K562 (cell line): ENCODE measurements at regions of chr12 and their contacts with region 1.

Region 1: DNA sequence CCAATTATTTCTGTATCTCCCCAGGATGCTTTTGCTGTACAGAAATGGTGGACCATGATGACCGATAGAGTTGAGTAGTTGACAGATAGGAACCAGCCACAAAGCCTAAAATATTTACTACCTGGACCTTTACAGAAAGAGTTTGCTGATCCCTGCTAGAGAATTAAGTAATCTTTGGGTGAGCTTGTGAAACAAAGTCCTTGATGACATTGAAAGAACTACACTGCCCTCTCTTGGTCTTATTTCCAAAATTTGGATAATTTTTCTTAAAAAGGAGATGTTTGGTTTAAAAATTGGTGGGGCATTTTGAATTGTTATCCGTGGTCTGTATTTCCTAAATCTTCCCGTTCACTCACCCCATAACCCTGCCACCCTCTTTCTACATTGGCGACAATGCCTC is 13.7 kb upstream of the TCTN1 start:
- DNase-seq: peak in 2 of 4 experiments; percentile 46 to 56
- ATAC-seq: peak; percentile 59
- H3K4me3 ChIP-seq: no peak overlapping the region
- H3K27ac ChIP-seq: no peak overlapping the region
- H3K4me1 ChIP-seq: no peaks in the 10 kb centered on the region
- H3K27me3 ChIP-seq: no peaks in the 10 kb centered on the region
- CTCF ChIP-seq: peak; percentile 41 to 80 (median 43); a peak in 5 of 6 replicates
- EP300 ChIP-seq: no peak
- POLR2A ChIP-seq: no peak
- RAD21 ChIP-seq: peak; percentile 86 to 94

Region 2: DNA sequence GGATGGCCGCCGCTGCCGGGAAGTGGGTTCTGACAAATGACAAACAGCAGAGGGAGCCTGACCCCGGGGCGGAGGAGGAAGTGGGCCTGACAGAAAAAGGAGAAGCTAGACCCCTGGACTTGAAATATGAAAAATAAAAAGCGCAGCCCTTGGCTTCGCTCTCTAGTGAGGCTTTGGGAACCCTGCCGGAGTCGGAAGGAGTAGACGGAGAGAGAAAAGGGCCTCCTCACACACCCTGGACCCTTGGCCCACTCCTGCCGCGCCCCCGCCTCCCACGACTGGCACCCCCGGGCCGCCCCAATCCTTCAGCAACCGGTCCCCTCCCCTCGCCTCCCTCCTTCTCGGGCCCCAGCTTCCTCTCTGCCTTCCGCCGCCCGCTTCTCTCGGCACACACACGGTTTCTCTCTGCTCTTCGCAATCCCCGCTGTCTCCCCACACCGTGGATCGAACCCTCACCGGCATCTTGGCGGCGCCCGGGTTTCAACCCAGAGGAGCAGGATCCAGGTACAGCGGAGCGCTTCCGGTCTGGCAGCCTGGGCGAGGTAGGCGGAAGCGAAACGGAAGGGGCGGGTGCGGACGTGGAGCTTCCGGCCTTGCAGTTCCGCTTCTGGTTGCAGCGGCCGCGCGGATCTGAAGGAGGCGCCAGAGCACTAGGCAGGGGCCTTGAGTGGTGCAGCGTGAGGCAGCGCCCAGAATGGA is 150.3 kb before region 1 on chr12 and contains the start of gene ARPC3:
- CTCF ChIA-PET with region 1: interaction called, 30 read pairs
- POLR2A ChIA-PET with region 1: interaction called, 3 read pairs
- in situ Hi-C with region 1: loop called (anchors 5 kb)
- intact Hi-C with region 1: loop called (anchors 1 kb)
- DNase-seq: peak; percentile 86 to 97 (median 89)
- ATAC-seq: peak; percentile 97
- H3K4me3 ChIP-seq: peak within 1 kb of the TSS; percentile 60
- H3K27ac ChIP-seq: peak within 1 kb of the TSS; percentile 82
- H3K4me1 ChIP-seq: peaks cover 6 to 13% of the 10 kb centered on the region in 2 experiments; a peak in 3 of 5 replicates
- H3K27me3 ChIP-seq: no peaks in the 10 kb centered on the region
- CTCF ChIP-seq: peak; percentile 94 to 97 (median 95)
- EP300 ChIP-seq: 0 out of 2 replicates have a peak, but pooled peaks have one; percentile 20
- POLR2A ChIP-seq: peak; percentile 94
- RAD21 ChIP-seq: peak; percentile 94 to 96
- polyA plus RNA-seq, gene ARPC3: 450 to 575 TPM

Region 3: DNA sequence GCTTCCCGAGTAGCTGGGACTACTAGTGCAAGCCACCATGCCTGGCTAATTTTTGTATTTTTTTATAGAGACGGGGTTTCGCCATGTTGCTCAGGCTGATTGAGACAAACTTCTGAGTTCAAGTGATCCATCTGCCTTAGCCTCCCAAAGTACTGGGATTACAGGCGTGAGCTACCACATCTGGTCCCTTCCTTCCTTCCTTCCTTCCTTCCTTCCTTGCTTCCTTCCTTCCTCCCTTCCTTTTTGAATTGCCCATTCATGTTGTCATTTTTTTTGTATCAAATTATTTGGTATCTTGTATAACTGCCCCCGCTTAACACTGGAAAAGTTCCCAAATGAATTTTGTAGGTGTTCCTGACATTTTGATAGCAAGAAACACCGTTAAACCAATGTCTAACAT is 86.4 kb before region 1 on chr12:
- CTCF ChIA-PET with region 1: interaction called, 15 read pairs
- POLR2A ChIA-PET with region 1: no interaction called
- in situ Hi-C with region 1: loop called (anchors 5 kb)
- intact Hi-C with region 1: loop called (anchors 2 kb)
- DNase-seq: no peak
- ATAC-seq: no peak
- H3K4me3 ChIP-seq: no peak overlapping the region
- H3K27ac ChIP-seq: no peak overlapping the region
- H3K4me1 ChIP-seq: no peaks in the 10 kb centered on the region; a peak in 1 of 5 replicates
- H3K27me3 ChIP-seq: no peaks in the 10 kb centered on the region
- CTCF ChIP-seq: no peak
- EP300 ChIP-seq: no peak
- POLR2A ChIP-seq: no peak
- RAD21 ChIP-seq: no peak

Region 4: DNA sequence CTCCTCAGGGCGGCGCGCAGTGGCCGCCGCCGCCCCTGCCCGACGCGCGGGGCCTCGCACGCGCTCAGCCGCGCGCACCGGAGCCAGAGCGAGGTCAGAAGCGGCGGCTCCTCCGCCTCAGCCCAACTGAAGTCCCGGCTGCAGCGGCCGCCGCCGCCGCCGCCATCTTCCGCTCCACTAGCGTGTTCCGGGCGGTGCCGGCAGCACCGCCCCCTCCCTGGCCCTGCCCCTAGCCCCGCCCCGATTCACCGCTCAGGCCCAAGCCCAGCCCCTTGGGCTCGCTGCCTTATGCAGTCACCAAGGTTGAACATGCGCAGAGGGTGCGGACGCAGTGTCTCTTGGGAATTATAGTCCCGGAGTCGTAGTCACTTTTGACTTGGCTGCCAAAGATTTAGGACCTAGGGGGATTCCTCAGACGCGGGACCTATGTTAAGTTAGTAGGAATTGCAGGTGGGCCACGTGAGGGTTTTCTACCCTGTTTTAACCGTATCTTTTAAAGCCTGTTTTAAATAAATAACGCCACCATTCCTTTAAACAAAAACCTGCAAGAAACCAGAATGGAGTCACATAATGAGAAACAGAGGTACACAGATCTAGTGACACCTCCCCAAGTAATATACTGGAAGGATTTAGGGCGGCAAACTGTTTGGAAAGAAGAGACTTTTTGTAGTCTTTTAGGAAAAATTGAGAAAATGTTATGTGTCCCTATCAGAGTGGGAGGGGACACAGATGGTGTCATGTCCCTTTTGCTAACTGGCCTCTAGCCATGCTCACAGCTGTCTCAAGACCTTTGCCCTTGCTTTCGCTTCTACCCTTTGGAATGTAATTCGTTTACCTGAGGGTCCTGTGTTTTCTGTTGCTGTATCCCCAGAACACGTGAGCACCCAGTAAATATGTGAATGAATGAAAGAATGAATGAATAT is 16.9 kb before region 1 on chr12 and contains the start of gene PPTC7:
- CTCF ChIA-PET with region 1: interaction called, 3 read pairs
- POLR2A ChIA-PET with region 1: interaction called, 10 read pairs
- in situ Hi-C with region 1: no loop called
- intact Hi-C with region 1: no loop called
- DNase-seq: peak; percentile 95 to 98 (median 96)
- ATAC-seq: peak; percentile 97
- H3K4me3 ChIP-seq: peak within 1 kb of the TSS; percentile 87
- H3K27ac ChIP-seq: peak within 1 kb of the TSS; percentile 84
- H3K4me1 ChIP-seq: peaks cover 23 to 28% of the 10 kb centered on the region in 2 experiments; a peak in 4 of 5 replicates
- H3K27me3 ChIP-seq: no peaks in the 10 kb centered on the region
- CTCF ChIP-seq: no peak
- EP300 ChIP-seq: no peak; the same call in 1 of the 2 replicates
- POLR2A ChIP-seq: peak; percentile 63
- RAD21 ChIP-seq: no peak
- polyA plus RNA-seq, gene PPTC7: 2.6 to 4.7 TPM

Region 5: DNA sequence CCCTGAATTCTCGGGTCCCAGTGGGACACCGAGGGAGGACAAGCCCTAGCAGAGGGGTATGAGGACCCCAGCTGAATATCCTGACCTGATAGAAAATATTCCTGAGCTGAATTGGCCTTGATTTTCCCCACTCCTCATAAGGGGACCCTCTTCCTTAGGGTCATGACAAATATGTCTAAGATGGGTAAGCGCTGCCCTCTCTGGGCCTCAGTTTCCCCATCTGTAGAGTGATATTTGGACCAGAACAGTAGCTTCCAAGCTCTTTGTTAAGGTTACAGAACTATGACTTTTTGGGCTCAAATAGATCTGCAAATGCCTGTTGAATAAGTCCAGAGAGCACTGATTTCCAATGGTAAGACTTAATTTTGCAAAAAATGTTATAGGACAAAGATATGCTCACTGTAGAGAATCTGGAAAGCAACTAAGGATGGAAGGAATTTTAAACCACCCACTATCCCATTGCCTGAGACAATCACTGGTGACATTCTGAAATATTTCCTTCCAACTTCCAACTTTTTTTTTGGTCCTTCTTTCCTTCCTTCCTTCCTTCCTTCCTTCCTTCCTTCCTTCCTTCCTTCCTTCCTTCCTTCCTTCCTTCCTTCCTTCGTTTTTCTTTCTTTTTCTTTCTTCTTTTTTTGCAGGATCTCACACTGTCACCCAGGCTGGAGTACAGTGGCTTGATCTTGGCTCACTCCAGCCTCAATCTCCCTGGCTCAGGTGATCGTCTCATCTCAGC is 288.2 kb after region 1 on chr12:
- CTCF ChIA-PET with region 1: no interaction called
- POLR2A ChIA-PET with region 1: no interaction called
- in situ Hi-C with region 1: no loop called
- intact Hi-C with region 1: loop called (anchors 5 kb)
- DNase-seq: no peak
- ATAC-seq: no peak
- H3K4me3 ChIP-seq: no peak overlapping the region
- H3K27ac ChIP-seq: no peak overlapping the region
- H3K4me1 ChIP-seq: no peaks in the 10 kb centered on the region
- H3K27me3 ChIP-seq: peaks cover 3 to 18% of the 10 kb centered on the region in 2 experiments
- CTCF ChIP-seq: no peak
- EP300 ChIP-seq: no peak
- POLR2A ChIP-seq: no peak
- RAD21 ChIP-seq: no peak